Dorsolateral prefrontal cortex (tissue), 120 donors: ENCODE measurements at regions of chr16 and their contacts with region 1.

Region 1: DNA sequence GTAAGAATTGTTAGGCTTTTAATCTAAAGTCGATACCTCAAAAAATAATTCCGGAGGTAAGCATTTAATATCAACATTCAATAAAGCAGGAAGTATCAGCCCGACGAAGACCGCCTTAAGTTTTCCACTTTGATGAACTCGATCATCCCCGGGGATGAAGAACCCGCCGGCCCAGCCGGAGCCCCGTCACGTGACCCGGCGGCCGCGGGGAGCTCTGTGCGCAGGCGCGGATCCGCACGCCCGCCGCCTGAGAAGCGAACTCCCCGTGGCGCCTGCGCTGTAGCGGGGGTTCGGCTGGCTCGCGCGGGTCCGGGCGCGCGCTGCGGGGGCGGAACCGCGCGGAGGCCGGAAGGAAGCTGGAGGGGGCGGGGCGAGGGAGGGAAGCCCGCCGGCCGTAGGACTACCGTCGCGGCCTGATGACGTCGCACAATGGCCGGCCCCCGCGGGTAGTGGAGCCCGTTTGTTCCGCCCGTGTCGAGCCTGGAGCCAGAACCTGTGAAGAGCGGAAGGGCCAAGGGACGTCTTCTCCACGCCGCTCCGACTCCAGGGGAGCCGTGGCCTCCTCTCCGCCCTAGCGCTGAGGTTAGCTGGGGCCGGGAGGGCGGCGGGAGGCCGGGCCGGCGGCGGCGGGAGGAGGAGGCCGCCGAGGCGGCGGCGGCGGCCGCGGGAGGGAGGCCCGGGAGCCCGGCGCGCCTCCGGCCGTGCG is at the start of gene ZC3H18:
- DNase-seq: peak; percentile 83 to 95 (median 94)
- H3K4me3 ChIP-seq: peak within 1 kb of the TSS; percentile 53 to 98 (median 85)
- H3K27ac ChIP-seq: peak within 1 kb of the TSS in 57 of 59 donors; percentile 33 to 91 (median 81)
- H3K27me3 ChIP-seq: no peaks in the 10 kb centered on the region
- CTCF ChIP-seq: peak in 23 of 56 donors; percentile 2 to 56 (median 22)
- total RNA-seq, gene ZC3H18: 29.2 to 64.6 (median 46.8) TPM

Region 2: DNA sequence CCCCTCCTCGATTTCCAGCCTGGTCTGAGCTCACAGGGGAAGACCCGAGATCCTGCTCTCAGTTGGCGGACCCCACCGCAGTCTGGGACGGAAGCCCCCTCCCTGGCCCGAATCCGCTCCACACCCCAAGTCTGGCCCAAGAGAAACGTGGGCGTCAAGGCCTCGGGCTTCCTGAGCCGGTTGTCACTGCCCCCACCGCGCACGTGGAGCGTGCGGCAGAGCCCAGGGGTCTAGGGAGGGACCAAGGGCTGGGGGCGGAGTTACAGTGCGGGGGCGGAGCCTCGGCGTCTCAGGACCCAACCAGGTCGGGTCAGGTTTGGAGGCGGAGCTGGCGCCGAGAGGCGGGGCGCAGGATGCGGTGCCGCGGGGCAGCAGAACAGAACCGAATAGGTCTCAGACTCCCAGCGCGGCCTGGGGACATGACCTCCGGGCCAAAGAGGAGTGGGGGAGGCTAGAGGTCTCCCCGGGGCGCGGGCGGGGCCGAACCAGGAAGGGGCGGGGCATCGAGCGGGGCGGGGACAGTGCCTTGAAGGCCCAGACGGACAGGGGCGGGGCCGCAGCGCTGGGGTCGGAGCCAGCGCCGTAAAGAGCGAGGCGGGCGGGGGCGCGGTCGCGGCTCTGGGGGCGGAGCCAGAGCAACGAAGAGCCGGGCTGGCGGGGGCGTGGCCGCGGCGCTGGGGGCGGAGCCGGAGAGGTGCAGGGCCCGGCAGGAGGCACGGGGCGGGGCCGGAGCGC is 117.5 kb before region 1 on chr16:
- intact Hi-C with region 1: loop called in 1 of 2 experiments (anchors 5 kb)
- DNase-seq: peak; percentile 87 to 96 (median 92)
- H3K4me3 ChIP-seq: peak overlapping the region; percentile 27 to 75 (median 61)
- H3K27ac ChIP-seq: peak overlapping the region in 41 of 59 donors; percentile 16 to 84 (median 62)
- H3K27me3 ChIP-seq: peaks cover 0 to 9% (median 0%) of the 10 kb centered on the region in 45 donors
- CTCF ChIP-seq: no peak

Region 3: DNA sequence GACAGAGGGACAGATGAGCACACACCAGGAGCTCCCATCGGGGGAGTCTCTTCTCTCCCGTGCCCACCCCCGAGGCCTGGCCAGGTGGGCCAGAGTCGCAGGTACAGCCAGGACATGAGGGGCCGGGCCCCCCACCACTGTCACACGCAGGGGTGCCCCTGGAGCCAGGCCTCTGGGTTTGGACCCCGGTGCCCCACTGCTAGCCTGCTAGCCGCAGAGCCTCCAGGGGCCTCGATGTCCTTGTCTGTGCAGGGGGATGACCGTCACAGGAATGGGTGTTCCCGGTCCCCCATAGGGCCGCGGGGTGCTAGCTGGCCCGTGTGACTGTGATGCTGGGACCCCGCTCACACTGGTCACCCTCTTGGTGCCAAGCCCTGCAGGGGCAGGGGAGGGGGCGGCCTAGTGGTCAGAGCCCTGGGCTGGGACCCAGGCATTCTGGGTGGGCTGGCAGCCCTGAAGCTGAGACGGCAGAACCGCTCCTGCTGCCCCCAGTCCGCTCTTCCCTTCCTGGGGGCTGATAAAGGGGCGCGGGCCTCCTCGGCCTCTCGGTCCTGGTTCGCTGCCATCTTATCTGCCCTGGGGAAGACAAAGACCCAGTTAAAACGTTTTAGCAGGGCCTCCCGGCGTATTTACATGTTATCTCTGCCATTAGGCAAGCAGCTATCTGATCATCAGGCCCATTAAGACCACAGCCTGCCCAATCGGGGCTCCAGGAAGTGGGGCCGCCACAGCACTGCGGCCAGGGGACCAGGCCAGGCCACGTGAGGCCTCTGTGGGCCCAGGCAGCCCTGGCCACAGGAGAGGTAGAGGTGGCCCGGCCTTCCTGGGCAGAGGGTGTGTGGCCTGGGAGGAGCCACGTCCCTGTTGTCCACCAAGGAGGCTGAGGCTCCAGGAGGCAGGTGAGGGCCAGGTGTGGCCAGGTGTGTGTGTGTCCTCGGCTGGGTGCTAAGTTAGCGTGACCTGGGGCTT is 57.1 kb before region 1 on chr16:
- intact Hi-C with region 1: no loop called
- DNase-seq: no peak
- H3K4me3 ChIP-seq: no peak overlapping the region
- H3K27ac ChIP-seq: no peak overlapping the region
- H3K27me3 ChIP-seq: no peaks in the 10 kb centered on the region
- CTCF ChIP-seq: no peak

Region 4: DNA sequence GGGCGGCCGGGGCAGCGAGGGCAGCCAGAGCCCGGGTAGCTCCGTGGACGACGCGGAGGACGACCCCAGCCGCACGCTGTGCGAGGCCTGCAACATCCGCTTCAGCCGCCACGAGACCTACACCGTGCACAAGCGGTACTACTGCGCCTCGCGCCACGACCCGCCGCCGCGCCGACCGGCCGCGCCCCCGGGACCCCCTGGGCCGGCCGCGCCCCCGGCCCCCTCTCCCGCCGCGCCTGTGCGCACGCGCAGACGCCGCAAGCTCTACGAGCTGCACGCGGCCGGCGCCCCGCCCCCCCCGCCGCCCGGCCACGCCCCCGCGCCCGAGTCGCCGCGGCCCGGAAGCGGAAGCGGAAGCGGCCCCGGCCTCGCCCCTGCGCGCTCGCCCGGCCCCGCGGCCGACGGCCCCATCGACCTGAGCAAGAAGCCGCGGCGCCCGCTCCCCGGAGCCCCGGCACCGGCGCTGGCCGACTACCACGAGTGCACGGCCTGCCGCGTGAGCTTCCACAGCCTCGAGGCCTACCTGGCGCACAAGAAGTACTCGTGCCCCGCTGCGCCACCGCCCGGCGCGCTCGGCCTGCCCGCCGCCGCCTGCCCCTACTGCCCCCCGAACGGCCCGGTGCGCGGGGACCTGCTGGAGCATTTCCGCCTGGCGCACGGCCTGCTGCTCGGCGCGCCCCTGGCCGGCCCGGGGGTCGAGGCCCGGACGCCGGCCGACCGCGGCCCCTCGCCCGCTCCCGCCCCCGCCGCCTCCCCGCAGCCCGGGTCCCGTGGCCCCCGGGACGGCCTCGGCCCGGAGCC is 36.0 kb before region 1 on chr16:
- intact Hi-C with region 1: loop called (anchors 2 kb)
- DNase-seq: peak in 8 of 10 donors; percentile 52 to 84 (median 64)
- H3K4me3 ChIP-seq: peak overlapping the region in 58 of 59 donors; percentile 46 to 91 (median 71)
- H3K27ac ChIP-seq: peak overlapping the region in 50 of 59 donors; percentile 38 to 91 (median 82)
- H3K27me3 ChIP-seq: peaks cover 0 to 4% (median 0%) of the 10 kb centered on the region in 45 donors
- CTCF ChIP-seq: peak in 4 of 56 donors; percentile 5 to 24 (median 14)

Region 5: DNA sequence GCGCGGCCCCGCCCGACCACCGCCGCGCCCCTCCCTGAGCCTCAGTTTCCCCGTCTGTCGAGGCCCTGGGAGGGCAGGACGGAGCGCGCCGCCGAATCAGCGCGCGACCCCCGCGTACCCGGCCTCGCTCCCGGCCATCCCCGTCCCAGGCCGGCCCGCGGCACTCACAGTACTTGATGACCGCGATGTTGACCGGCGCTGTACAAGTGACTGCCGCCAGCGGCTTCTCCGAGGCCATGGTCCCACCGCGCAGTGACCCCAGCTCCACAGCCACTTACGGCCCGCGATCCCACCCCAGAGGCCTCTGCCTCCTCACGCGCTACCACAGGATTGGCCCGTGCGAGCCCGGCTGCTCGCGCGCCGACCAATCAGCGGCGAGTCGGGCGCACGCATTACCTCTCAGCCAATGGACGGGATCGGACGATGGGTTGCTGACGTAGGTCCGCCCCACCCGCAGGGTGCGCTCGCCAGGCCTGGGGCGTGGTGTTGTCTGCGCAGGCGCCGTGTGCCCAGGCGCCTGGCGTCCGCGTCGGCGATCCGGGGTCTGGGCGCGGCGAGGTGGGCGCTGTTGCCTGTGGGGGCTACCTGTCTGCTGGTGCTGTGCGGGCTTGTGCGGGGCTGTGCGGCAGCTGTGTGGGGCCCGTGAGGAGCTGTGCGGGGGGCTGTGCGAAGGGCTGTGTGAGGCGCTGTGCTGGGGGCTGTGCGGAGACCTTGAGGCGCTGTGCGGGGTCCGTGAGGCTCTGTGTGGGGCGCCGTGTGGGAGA is 92.9 kb after region 1 on chr16 and contains the start of gene MVD:
- intact Hi-C with region 1: loop called in 1 of 2 experiments (anchors 2 kb)
- DNase-seq: peak; percentile 96 to 100 (median 97)
- H3K4me3 ChIP-seq: peak within 1 kb of the TSS; percentile 64 to 100 (median 95)
- H3K27ac ChIP-seq: peak within 1 kb of the TSS in 56 of 59 donors; percentile 30 to 96 (median 85)
- H3K27me3 ChIP-seq: no peaks in the 10 kb centered on the region
- CTCF ChIP-seq: peak in 22 of 56 donors; percentile 11 to 46 (median 26)
- total RNA-seq, gene MVD: 44.3 to 110 (median 70.6) TPM

Region 6: DNA sequence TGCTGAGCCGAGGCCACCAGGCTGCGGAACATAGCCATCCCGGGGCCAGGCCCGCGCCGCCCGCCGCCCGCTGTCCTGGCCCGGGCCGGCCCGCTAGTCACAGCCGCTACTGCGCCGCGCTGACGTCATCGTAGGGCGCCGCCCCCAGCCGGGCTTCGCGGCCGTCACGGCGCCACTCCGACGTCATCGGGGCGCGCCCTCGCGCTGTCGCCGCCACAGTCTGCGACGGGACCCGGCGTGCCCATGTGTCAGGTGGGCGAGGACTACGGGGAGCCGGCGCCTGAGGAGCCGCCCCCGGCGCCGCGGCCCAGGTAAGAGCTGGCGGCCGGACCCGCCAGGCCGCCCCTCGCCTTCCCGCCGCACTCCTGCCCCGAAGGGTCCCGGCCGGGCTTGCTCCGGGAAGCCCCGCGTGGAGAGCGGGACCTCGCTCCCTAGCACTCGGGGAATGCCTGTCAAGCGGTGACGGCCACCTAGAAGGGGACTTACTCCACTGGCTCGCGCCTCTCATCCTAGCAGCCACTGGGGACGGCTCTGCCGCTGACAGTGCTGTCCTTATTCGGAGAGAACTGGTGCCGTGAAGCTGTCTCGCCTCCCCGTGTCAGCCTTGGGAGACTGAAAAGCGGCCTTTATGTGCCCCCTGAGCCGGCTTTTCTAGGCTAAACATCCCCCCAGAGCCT is 136.3 kb after region 1 on chr16 and contains the starts of genes CTU2 and RNF166:
- intact Hi-C with region 1: loop called (anchors 2 to 5 kb)
- DNase-seq: peak; percentile 78 to 95 (median 90)
- H3K4me3 ChIP-seq: peak within 1 kb of the TSS; percentile 63 to 100 (median 98)
- H3K27ac ChIP-seq: peak within 1 kb of the TSS in 55 of 59 donors; percentile 8 to 94 (median 80)
- H3K27me3 ChIP-seq: no peaks in the 10 kb centered on the region
- CTCF ChIP-seq: peak in 17 of 56 donors; percentile 1 to 47 (median 23)
- total RNA-seq, gene CTU2: 14.1 to 40.3 (median 24.0) TPM
- total RNA-seq, gene RNF166: 15.1 to 52.4 (median 24.8) TPM

Region 7: DNA sequence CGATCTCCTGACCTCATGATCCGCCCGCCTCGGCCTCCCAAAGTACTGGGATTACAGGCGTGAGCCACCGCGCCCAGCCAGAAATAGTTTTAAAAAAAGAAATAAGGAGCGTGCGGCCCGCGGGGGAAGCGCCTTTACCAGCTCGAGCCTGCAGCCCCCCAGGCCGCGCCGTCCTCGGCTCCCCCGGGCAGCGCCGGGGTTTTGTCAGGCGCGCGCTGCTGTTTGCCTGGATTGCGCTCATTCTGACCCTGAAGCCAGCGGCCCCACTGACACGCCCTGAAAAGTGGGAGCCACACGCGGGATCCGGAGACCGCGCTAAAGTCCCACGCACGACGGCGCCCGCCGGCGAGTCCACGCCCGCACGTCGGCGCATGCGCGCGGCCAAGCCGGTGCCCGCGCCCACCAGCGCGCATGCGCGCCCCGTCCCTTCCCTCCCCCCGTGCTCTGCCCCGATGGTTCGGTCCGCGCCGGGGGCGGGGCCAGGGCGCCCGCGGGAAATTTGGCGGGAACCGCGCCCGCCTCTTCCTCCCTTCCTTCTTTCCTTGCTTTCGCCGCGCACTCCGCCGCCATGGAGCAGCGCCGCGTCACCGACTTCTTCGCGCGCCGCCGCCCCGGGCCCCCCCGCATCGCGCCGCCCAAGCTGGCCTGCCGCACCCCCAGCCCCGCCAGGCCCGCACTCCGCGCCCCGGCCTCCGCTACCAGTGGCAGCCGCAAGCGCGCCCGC is 233.3 kb after region 1 on chr16 and contains the start of gene CDT1:
- intact Hi-C with region 1: loop called in 1 of 2 experiments (anchors 10 kb)
- DNase-seq: peak in 8 of 10 donors; percentile 44 to 88 (median 67)
- H3K4me3 ChIP-seq: peak within 1 kb of the TSS; percentile 43 to 84 (median 72)
- H3K27ac ChIP-seq: peak within 1 kb of the TSS in 38 of 59 donors; percentile 6 to 87 (median 57)
- H3K27me3 ChIP-seq: no peaks in the 10 kb centered on the region
- CTCF ChIP-seq: peak in 21 of 56 donors; percentile 8 to 44 (median 22)
- total RNA-seq, gene CDT1: 0.49 to 5.3 (median 2.0) TPM

Region 8: DNA sequence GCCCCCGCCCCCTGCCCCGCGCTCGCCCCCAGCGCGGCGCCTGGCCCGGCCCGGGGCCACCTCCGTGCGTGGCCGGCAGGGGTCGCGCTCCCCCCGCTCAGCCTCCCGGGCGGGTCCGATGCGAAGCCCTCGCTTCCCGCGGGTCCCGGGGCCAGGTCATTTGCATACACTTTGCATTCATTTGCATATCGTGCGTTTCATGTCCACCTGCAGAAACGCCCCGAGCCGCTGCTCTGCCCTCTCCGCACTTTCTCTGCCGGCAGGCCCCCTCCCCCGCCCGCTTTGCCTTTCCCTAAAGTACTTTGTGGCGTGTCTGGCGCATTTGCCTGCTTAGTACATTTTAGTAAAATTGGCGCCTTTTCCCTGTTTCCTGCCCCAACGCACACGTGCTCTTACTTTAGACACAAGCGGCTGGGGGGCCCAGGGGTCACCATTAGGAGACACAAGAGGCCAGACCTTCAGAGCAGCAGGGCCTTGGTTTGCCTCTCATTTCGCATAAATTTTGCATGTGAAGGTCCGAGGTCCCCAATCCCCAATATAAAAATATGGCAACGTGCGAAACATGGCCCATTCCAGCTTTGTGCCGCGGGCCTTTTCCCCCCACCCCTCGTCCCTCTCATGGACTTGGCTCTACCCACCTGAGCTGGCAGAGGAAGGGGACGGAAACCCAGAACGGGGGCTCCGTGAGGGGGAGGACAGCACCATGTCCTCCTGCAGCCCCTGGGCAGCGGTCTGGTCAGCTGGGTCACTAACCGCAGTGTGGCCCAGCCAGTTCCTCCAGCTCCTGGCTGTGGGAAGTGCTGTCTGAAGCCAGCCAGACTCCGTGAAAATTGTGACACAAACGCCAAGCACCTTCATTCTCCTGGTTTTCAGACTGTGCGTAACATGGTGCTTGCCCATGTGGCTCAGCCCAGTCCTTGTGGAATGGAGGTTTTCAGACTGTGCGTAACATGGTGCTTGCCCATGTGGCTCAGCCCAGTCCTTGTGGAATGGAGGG is 372.1 kb after region 1 on chr16:
- intact Hi-C with region 1: no loop called
- DNase-seq: peak in 2 of 10 donors; percentile 71 to 77
- H3K4me3 ChIP-seq: peak overlapping the region in 54 of 59 donors; percentile 10 to 72 (median 44)
- H3K27ac ChIP-seq: no peak overlapping the region
- H3K27me3 ChIP-seq: peaks cover 0 to 33% (median 5%) of the 10 kb centered on the region in 45 donors
- CTCF ChIP-seq: peak in 55 of 56 donors; percentile 17 to 90 (median 60)

Region 9: GRCh38 chr16:89217388-89218191 is 647.5 kb after region 1 on chr16 and contains the start of gene ZNF778:
- intact Hi-C with region 1: loop called in 1 of 2 experiments (anchors 2 kb)
- DNase-seq: peak; percentile 70 to 90 (median 82)
- H3K4me3 ChIP-seq: peak within 1 kb of the TSS; percentile 60 to 100 (median 93)
- H3K27ac ChIP-seq: peak within 1 kb of the TSS; percentile 41 to 98 (median 92)
- H3K27me3 ChIP-seq: no peaks in the 10 kb centered on the region
- CTCF ChIP-seq: peak in 32 of 56 donors; percentile 10 to 51 (median 29)
- total RNA-seq, gene ZNF778: 10.1 to 35.3 (median 17.7) TPM